Activated T-helper 2 cell treated with anti-CD3 and anti-CD28 coated beads, Interferon-gamma antibody, Interleukin-2, Interleukin-4, amounts not matched to agents 10 μg/mL and 5 μg/mL and 100 μg/mL, durations not matched to agents 14 hours and 24 hours and 36 hours (primary cell): ENCODE measurements at regions of chr1 and their contacts with region 1.

Region 1: GRCh38 chr1:173476664-173477285 is 360 bp upstream of the PRDX6 start:
- DNase-seq: peak; percentile 74
- H3K4me3 Mint-ChIP-seq: peak overlapping the region; percentile 92
- H3K27ac Mint-ChIP-seq: peak overlapping the region; percentile 94
- H3K4me1 Mint-ChIP-seq: peaks cover 53% of the 10 kb centered on the region
- H3K27me3 Mint-ChIP-seq: no peaks in the 10 kb centered on the region

Region 2: DNA sequence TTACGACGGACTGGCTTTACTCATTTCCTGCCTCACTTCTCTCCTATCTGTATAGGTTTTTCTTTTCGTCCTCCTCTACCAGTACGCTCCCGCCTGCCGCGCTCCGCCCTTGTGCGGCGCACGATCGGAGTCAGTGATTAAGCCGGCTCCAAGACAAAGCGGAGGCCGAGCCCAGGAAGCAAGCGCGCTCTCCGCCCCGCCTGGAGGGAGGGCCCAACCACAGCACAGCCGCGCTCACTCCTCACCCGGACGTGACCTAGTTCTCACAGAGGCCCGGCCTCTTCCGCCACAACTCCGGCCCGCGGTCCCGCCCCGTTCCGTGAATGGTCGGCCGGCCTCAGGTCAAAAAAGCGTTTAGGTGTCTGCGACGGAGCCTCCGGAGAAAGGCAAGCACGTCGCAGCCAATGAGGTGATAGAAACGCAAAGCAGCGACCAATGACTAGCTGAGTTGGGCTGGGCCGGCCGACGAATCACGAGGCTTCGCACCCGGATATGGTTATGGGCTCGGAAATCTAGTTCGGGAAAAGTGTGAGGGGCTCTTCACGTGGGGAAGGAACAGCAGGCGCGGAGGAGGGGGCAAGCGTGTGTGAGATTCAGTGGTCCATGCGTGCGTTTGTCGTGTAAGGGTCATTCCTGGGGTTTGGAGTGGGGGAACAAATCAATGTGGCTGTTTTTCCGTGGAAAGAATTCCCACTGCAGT is 1695.4 kb before region 1 on chr1 and contains the start of gene METTL13:
- intact Hi-C with region 1: loop called (anchors 10 kb)
- DNase-seq: peak; percentile 99
- H3K4me3 Mint-ChIP-seq: peak within 1 kb of the TSS; percentile 93
- H3K27ac Mint-ChIP-seq: peak within 1 kb of the TSS; percentile 92
- H3K4me1 Mint-ChIP-seq: peaks cover 36% of the 10 kb centered on the region
- H3K27me3 Mint-ChIP-seq: no peaks in the 10 kb centered on the region
- total RNA-seq, gene METTL13: 50.0 and 53.6 TPM in 2 replicates

Region 3: GRCh38 chr1:173429471-173430402 is 47.0 kb before region 1 on chr1:
- intact Hi-C with region 1: loop called (anchors 1 kb)
- DNase-seq: peak; percentile 42
- H3K4me3 Mint-ChIP-seq: peak overlapping the region; percentile 38
- H3K27ac Mint-ChIP-seq: peak overlapping the region; percentile 47
- H3K4me1 Mint-ChIP-seq: peaks cover 18% of the 10 kb centered on the region
- H3K27me3 Mint-ChIP-seq: no peaks in the 10 kb centered on the region

Region 4: DNA sequence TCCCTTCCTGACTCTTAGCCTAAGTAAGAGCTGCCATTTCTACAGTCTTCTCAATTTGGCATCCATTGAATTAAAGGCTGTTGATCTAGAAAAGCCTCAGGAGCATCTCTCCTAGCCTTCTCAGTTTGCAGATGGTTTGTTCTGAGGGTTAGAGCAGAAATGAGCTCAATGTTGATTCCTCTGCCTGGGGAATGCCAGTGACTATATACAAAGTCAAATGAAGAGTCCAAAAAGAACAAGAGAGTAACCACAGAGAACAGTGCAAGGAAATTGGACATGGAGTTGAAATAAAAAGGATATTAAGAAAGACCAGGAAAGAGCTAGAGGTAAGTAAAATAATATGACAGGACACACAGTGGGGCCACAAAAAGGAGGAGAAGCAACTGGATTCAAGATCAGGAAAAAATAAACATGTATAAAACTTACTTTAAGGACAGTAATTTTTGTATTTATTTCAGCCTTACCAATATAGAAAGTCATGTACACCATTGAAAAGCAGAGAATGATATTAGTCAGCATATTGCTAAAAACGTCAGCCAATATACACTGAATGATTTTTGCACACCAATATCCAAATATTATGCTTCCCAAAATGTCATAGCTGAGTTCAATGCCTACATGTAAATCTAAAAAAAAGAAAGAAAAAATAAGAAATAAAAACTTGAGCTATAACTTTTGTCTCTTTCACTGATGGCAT is 104.8 kb after region 1 on chr1:
- intact Hi-C with region 1: no loop called
- DNase-seq: no peak
- H3K4me3 Mint-ChIP-seq: no peak overlapping the region
- H3K27ac Mint-ChIP-seq: peak overlapping the region; percentile 40
- H3K4me1 Mint-ChIP-seq: peaks cover 2% of the 10 kb centered on the region
- H3K27me3 Mint-ChIP-seq: peaks cover 6% of the 10 kb centered on the region

Region 5: GRCh38 chr1:173714759-173715537 is 238.2 kb after region 1 on chr1 and contains the start of gene KLHL20:
- intact Hi-C with region 1: loop called (anchors 1 kb)
- DNase-seq: peak; percentile 83
- H3K4me3 Mint-ChIP-seq: peak within 1 kb of the TSS; percentile 97
- H3K27ac Mint-ChIP-seq: peak within 1 kb of the TSS; percentile 94
- H3K4me1 Mint-ChIP-seq: peaks cover 18% of the 10 kb centered on the region
- H3K27me3 Mint-ChIP-seq: peaks cover 14% of the 10 kb centered on the region
- total RNA-seq, gene KLHL20: 15.4 and 17.6 TPM in 2 replicates

Region 6: GRCh38 chr1:173867753-173868265 is 391.0 kb after region 1 on chr1 and contains the start of gene GAS5:
- intact Hi-C with region 1: loop called (anchors 2 kb)
- DNase-seq: peak; percentile 99
- H3K4me3 Mint-ChIP-seq: peak within 1 kb of the TSS; percentile 98
- H3K27ac Mint-ChIP-seq: peak within 1 kb of the TSS; percentile 96
- H3K4me1 Mint-ChIP-seq: peaks cover 49% of the 10 kb centered on the region
- H3K27me3 Mint-ChIP-seq: no peaks in the 10 kb centered on the region
- total RNA-seq, gene GAS5: 650 and 661 TPM in 2 replicates

Region 7: GRCh38 chr1:174999216-174999925 is 1522.6 kb after region 1 on chr1:
- intact Hi-C with region 1: loop called (anchors 2 kb)
- DNase-seq: peak; percentile 96
- H3K4me3 Mint-ChIP-seq: no peak overlapping the region
- H3K27ac Mint-ChIP-seq: no peak overlapping the region
- H3K4me1 Mint-ChIP-seq: peaks cover 38% of the 10 kb centered on the region
- H3K27me3 Mint-ChIP-seq: no peaks in the 10 kb centered on the region